ENCODE measurements at regions of chr2 and their contacts with region 1.

Region 1: DNA sequence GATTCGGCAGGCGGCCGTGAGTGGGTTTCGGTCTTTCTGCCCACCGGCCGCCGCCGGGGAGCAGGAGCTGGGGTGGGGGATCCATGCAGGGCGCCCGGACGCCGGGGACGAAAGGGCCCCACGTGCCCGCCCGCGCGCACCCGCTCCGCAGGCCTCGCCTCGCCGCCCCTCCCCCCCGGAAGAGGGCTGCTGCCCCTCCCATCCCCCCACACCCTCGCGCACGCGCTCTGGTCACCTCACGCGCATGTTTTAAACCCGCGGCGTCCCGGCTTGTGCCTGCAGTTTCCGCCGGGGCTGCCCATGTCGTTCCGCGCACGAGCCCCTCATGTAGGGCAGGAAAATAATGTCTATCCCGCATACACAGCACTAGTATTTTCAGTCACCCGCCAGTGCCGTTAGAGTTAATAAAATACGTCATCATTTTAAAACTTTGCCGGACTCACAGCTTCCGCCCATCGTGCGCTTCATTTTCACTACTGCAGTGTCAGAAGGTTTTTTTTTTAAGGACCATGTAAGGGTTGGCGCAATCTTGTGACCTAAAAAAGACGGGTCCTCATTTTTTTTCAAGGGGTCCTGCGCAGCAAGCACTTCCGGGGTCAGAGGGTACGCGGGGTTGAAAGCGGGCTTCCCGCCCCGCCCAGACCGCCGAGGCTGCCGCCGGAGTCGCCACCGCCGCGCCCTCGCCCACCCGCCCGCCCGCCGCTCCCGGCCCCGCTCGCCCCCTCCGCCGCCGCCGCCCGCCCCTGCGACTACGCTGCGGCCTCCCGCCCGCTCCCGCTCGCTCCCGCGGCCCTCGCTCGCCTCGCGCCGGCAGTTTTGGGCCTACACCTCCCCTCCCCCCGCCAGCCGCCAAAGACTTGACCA is at the start of gene PCBP1:
- DNase-seq: peak; percentile 90
- ATAC-seq: peak; percentile 39
- H3K4me3 ChIP-seq: peak within 1 kb of the TSS; percentile 88 to 89
- H3K27ac ChIP-seq: peak within 1 kb of the TSS; percentile 100
- H3K4me1 ChIP-seq: peaks cover 41 to 63% of the 10 kb centered on the region in 2 experiments
- H3K27me3 ChIP-seq: no peaks in the 10 kb centered on the region
- CTCF ChIP-seq: no peak
- POLR2A ChIP-seq: no peak
- RAD21 ChIP-seq: no peak
- total RNA-seq, gene PCBP1: 256 TPM

Region 2: GRCh38 chr2:68157402-68158133 is 1929.5 kb before region 1 on chr2 and contains the start of gene PNO1:
- CTCF ChIA-PET with region 1: no interaction called
- POLR2A ChIA-PET with region 1: no interaction called
- RAD21 ChIA-PET with region 1: no interaction called
- intact Hi-C with region 1: no loop called
- DNase-seq: peak; percentile 92
- ATAC-seq: peak; percentile 93
- H3K4me3 ChIP-seq: peak within 1 kb of the TSS; percentile 77 to 92
- H3K27ac ChIP-seq: peak within 1 kb of the TSS; percentile 85
- H3K4me1 ChIP-seq: peaks cover 3 to 13% of the 10 kb centered on the region in 2 experiments; a peak in 3 of 4 replicates
- H3K27me3 ChIP-seq: no peaks in the 10 kb centered on the region
- CTCF ChIP-seq: no peak
- POLR2A ChIP-seq: peak; percentile 46
- RAD21 ChIP-seq: no peak
- total RNA-seq, gene PNO1: 23.3 TPM

Region 3: GRCh38 chr2:69667805-69668382 is 419.2 kb before region 1 on chr2:
- CTCF ChIA-PET with region 1: no interaction called
- POLR2A ChIA-PET with region 1: no interaction called
- RAD21 ChIA-PET with region 1: no interaction called
- intact Hi-C with region 1: no loop called
- DNase-seq: no peak
- ATAC-seq: 0 out of 2 replicates have a peak, but pooled peaks have one; percentile 32
- H3K4me3 ChIP-seq: no peak overlapping the region
- H3K27ac ChIP-seq: no peak overlapping the region
- H3K4me1 ChIP-seq: 0 out of 4 replicates have a peak, but pooled peaks cover 5% of the 10 kb centered on the region in 2 experiments
- H3K27me3 ChIP-seq: no peaks in the 10 kb centered on the region
- CTCF ChIP-seq: no peak
- POLR2A ChIP-seq: no peak
- RAD21 ChIP-seq: no peak

Region 4: DNA sequence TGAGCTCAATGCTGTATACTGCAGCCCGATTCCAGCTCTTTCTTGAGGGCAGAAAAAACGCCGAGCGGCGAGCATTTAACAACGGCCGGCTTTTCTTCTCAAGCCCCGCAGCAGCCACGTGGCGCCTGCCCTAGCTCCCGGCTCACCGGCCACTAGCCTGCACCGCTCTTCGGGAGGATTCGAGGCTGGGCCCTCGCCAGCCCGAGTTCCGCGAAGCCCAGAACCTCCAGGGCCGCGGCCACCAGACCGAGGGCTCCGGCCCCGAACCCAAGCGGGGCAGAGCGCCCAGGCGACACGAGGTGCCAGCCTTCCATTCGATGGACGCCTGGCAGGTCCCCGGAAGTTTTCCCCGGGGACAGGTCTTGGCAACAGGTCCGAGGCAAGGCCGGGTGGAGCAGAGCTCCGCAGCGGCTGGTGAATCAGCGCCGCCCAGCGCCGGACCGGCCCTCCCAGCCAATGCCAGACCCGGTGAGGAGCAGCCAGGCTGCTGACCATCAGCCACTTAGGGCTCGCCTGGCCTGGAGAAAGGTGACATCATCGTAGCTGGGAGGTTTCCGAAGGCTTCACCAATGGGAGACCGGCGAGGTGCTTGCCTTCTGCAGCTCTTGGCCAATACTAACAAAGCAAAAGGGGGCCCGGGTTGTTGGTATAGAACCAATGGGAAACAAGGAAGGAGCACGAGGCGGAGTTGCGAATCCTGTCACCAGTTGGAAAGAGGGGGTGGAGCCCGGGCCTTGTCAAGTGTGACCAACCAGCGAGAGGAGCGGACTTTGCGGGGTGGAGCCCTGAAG is 172.7 kb before region 1 on chr2:
- CTCF ChIA-PET with region 1: interaction called, 6 read pairs
- POLR2A ChIA-PET with region 1: interaction called, 32 read pairs
- RAD21 ChIA-PET with region 1: interaction called, 3 to 4 read pairs
- intact Hi-C with region 1: loop called (anchors 2 kb)
- DNase-seq: peak; percentile 100
- ATAC-seq: peak; percentile 91
- H3K4me3 ChIP-seq: peak overlapping the region; percentile 55 to 79
- H3K27ac ChIP-seq: peak overlapping the region; percentile 81
- H3K4me1 ChIP-seq: peaks cover 0 to 18% of the 10 kb centered on the region in 2 experiments; a peak in 3 of 4 replicates
- H3K27me3 ChIP-seq: no peaks in the 10 kb centered on the region
- CTCF ChIP-seq: peak in 1 of 3 experiments; percentile 22; a peak in 1 of 6 replicates
- POLR2A ChIP-seq: no peak
- RAD21 ChIP-seq: peak; percentile 64

Region 5: GRCh38 chr2:70104231-70105111 is 17.4 kb after region 1 on chr2:
- CTCF ChIA-PET with region 1: interaction called, 3 read pairs
- POLR2A ChIA-PET with region 1: interaction called, 11 read pairs
- RAD21 ChIA-PET with region 1: no interaction called
- intact Hi-C with region 1: no loop called
- DNase-seq: no peak
- ATAC-seq: no peak
- H3K4me3 ChIP-seq: peak overlapping the region in 1 of 2 experiments; percentile 8; a peak in 1 of 4 replicates
- H3K27ac ChIP-seq: peak overlapping the region; percentile 61
- H3K4me1 ChIP-seq: peaks cover 39 to 58% of the 10 kb centered on the region in 2 experiments
- H3K27me3 ChIP-seq: no peaks in the 10 kb centered on the region
- CTCF ChIP-seq: no peak
- POLR2A ChIP-seq: no peak
- RAD21 ChIP-seq: no peak; the same call in 1 of the 2 replicates

Region 6: DNA sequence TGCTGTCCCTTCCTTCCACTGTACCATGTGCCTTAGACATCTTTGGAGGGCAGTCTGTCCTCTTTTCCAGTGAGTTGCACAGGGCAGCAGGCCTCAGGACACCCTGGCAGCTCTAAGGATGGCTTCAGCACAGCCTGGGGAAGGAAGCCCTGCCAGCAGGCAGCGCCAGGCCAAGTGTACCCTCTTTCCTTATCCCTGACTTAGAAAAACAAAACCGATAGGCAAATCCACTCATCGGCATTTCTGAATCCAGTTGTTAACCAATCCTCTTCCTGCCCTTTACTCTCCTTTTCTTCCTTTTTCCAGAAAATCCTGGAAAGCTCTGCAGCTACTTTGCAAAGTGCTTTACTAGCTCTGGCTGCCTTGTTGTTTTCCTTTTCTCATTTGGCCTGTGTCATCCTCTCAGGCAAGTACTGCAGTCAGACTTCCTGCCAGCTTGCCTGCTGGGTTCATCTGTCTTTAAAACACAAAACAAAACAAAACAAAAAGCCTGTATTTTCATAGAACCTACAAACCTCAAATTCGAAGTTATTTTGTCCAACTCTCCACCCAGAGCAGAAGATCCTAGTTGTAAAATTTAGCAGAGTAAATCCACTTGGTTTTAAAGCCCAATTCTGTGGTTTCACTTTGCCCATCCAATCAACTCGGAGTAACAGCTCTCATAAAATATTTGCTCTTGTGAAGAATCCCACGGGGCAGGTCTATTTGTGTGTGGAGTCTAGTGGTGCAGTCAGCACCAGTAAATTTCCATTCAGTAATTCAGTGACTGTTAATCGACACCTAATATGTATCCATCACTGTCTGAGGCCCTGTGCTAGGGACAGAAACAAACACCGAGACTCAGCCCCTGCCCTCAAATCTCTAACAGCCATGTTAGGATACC is 45.4 kb after region 1 on chr2:
- CTCF ChIA-PET with region 1: no interaction called
- POLR2A ChIA-PET with region 1: interaction called, 15 read pairs
- RAD21 ChIA-PET with region 1: no interaction called
- intact Hi-C with region 1: no loop called
- DNase-seq: no peak
- ATAC-seq: 0 out of 2 replicates have a peak, but pooled peaks have one; percentile 21
- H3K4me3 ChIP-seq: peak overlapping the region in 1 of 2 experiments; percentile 16; a peak in 1 of 4 replicates
- H3K27ac ChIP-seq: peak overlapping the region; percentile 58
- H3K4me1 ChIP-seq: peaks cover 57 to 59% of the 10 kb centered on the region in 2 experiments
- H3K27me3 ChIP-seq: no peaks in the 10 kb centered on the region
- CTCF ChIP-seq: no peak
- POLR2A ChIP-seq: no peak
- RAD21 ChIP-seq: no peak

Region 7: DNA sequence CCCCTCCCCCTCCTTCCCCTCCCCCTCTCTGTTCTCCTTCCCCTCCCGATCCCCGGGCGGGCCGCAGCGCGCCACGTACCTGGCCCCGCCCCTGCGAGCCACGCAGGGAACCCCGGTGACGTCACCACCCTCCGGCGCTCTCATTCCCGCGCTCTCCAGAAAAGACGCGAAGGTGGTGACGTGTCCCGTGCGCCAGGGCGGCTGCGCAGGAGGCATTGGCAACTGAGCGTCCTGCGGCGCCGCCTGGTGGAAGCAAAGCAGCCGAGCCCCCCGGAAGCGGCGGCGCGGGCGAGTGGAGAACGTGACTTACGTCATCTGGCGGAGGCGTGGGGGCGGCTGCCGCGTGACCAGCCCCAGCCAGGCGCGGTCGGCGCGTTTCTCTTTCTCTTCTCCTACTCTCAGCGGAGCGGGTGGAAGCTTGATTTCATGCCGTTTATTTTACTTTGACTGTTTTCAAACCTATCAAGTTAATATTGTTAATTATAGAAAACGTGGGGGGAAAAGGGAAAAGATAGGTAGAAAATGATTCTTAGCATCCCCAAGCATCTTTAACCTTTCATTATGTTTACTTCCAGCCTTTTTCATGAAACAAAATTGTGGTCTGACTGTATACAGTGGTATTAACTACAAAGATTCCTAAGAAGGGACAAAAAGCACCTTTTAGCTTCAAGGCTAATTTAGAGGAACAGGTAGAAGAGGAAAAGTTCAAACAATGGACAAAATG is 55.7 kb after region 1 on chr2:
- CTCF ChIA-PET with region 1: no interaction called
- POLR2A ChIA-PET with region 1: interaction called, 54 read pairs
- RAD21 ChIA-PET with region 1: no interaction called
- intact Hi-C with region 1: loop called (anchors 1 kb)
- DNase-seq: peak; percentile 98
- ATAC-seq: peak; percentile 74
- H3K4me3 ChIP-seq: peak overlapping the region; percentile 40 to 63
- H3K27ac ChIP-seq: peak overlapping the region; percentile 99
- H3K4me1 ChIP-seq: peaks cover 35 to 51% of the 10 kb centered on the region in 2 experiments
- H3K27me3 ChIP-seq: no peaks in the 10 kb centered on the region
- CTCF ChIP-seq: peak in 2 of 3 experiments; percentile 83 to 88; a peak in 4 of 6 replicates
- POLR2A ChIP-seq: peak; percentile 31
- RAD21 ChIP-seq: no peak

Region 8: GRCh38 chr2:70190418-70191243 is 103.6 kb after region 1 on chr2 and contains the start of gene C2orf42:
- CTCF ChIA-PET with region 1: no interaction called
- POLR2A ChIA-PET with region 1: interaction called, 10 read pairs
- RAD21 ChIA-PET with region 1: no interaction called
- intact Hi-C with region 1: loop called (anchors 5 kb)
- DNase-seq: peak; percentile 97
- ATAC-seq: peak; percentile 91
- H3K4me3 ChIP-seq: peak within 1 kb of the TSS; percentile 79 to 87
- H3K27ac ChIP-seq: peak within 1 kb of the TSS; percentile 86
- H3K4me1 ChIP-seq: peaks cover 7 to 14% of the 10 kb centered on the region in 2 experiments; a peak in 3 of 4 replicates
- H3K27me3 ChIP-seq: no peaks in the 10 kb centered on the region
- CTCF ChIP-seq: no peak
- POLR2A ChIP-seq: peak; percentile 94
- RAD21 ChIP-seq: peak; percentile 10; the same call in 1 of the 2 replicates
- total RNA-seq, gene C2orf42: 17.4 TPM

Region 9: GRCh38 chr2:70248181-70248847 is 161.2 kb after region 1 on chr2 and contains the start of gene TIA1:
- CTCF ChIA-PET with region 1: no interaction called
- POLR2A ChIA-PET with region 1: no interaction called
- RAD21 ChIA-PET with region 1: no interaction called
- intact Hi-C with region 1: loop called (anchors 5 kb)
- DNase-seq: peak; percentile 96
- ATAC-seq: peak; percentile 94
- H3K4me3 ChIP-seq: peak within 1 kb of the TSS; percentile 85 to 94
- H3K27ac ChIP-seq: peak within 1 kb of the TSS; percentile 89
- H3K4me1 ChIP-seq: peaks cover 10 to 18% of the 10 kb centered on the region in 2 experiments; a peak in 3 of 4 replicates
- H3K27me3 ChIP-seq: no peaks in the 10 kb centered on the region
- CTCF ChIP-seq: no peak
- POLR2A ChIP-seq: peak; percentile 48
- RAD21 ChIP-seq: no peak
- total RNA-seq, gene TIA1: 94.1 TPM